HCT116 (cell line): ENCODE measurements at regions of chr7 and their contacts with region 1.

Region 1: DNA sequence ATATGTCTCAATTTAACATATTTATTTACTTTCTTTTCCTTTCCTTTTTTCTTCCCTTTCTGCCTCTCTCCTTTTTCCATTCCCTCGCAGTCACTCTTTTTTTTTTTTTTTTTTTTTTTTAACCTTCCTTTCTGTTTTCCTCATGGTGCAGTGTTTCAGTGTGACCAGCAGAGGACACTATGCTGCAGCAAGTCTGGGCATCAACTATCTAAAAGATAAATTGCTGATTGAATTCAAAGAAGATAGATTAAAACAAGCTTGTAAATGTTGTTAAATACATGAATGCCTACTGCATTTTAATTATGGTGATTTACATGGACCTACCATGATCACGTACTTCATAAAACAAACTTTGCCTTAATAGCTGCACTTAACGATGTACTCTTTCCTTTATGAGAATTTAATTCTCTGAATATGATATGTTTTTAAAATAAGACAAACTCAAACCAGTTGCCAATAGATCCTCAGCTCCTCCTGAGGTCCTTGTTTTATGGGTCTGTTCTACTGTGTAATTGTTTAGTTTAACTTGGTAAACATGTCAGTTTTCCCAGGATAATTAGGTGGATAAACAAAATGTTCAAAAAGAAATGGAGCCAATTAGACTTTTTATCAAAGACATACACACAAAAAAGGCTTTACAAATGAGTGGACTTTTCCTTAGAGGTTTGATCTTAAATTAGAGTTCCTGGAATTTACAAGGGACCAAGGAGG is 101.0 kb upstream of the AGR3 start:
- DNase-seq: peak; percentile 35
- ATAC-seq: no peak; the same call in 1 of the 2 replicates
- H3K4me3 ChIP-seq: no peak overlapping the region
- H3K27ac ChIP-seq: no peak overlapping the region
- H3K4me1 ChIP-seq: peaks cover 3 to 6% of the 10 kb centered on the region in 2 experiments; a peak in 1 of 4 replicates
- H3K27me3 ChIP-seq: no peaks in the 10 kb centered on the region
- CTCF ChIP-seq: peak; percentile 79 to 98 (median 93)
- POLR2A ChIP-seq: no peak
- RAD21 ChIP-seq: peak; percentile 90

Region 2: GRCh38 chr7:16817536-16817935 is 165.3 kb before region 1 on chr7:
- CTCF ChIA-PET with region 1: no interaction called
- POLR2A ChIA-PET with region 1: no interaction called
- RAD21 ChIA-PET with region 1: no interaction called
- intact Hi-C with region 1: no loop called
- DNase-seq: no peak
- ATAC-seq: peak; percentile 30; the same call in 1 of the 2 replicates
- H3K4me3 ChIP-seq: no peak overlapping the region
- H3K27ac ChIP-seq: no peak overlapping the region
- H3K4me1 ChIP-seq: peaks cover 0 to 9% of the 10 kb centered on the region in 2 experiments; a peak in 2 of 4 replicates
- H3K27me3 ChIP-seq: no peaks in the 10 kb centered on the region
- CTCF ChIP-seq: no peak
- POLR2A ChIP-seq: no peak
- RAD21 ChIP-seq: no peak

Region 3: DNA sequence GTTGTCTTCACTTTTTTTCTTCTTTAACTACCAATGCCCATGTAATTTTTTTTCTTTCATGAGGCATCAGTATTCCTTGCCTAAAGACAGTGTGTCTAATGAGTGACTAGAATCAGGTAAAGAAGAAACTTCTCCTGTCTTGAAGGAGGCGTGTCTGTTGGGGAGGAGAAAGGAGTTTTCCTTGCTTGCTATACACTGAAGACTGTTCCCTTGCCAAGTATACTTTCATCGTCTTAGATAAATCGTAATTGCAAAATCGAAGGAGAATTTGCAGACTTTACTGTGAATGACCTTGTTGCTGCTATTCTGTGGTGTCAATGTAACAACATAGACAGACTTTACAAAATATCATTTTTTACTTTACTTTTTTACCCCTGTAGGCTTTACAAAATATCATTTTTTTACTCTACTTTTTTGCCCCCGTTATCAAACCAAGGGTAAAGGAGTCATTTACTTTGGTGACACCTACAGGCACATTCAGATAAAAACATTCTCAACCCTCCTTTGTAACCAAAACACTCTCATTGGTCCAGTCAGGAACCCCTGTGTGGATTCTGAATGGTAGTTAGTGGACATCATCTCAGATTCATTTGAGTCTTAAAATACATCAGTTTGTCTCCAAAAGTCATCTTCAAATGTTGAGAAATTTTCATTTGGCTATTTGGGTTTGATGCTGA is 548.1 kb after region 1 on chr7:
- CTCF ChIA-PET with region 1: interaction called, 3 read pairs
- POLR2A ChIA-PET with region 1: no interaction called
- RAD21 ChIA-PET with region 1: interaction called in 1 of 2 experiments, 4 read pairs
- intact Hi-C with region 1: loop called (anchors 1 kb)
- DNase-seq: peak; percentile 26
- ATAC-seq: peak; percentile 83
- H3K4me3 ChIP-seq: no peak overlapping the region
- H3K27ac ChIP-seq: no peak overlapping the region
- H3K4me1 ChIP-seq: peaks cover 0 to 13% of the 10 kb centered on the region in 2 experiments; a peak in 1 of 4 replicates
- H3K27me3 ChIP-seq: no peaks in the 10 kb centered on the region
- CTCF ChIP-seq: peak; percentile 37 to 56 (median 49); a peak in 5 of 6 replicates
- POLR2A ChIP-seq: no peak
- RAD21 ChIP-seq: peak; percentile 77

Region 4: DNA sequence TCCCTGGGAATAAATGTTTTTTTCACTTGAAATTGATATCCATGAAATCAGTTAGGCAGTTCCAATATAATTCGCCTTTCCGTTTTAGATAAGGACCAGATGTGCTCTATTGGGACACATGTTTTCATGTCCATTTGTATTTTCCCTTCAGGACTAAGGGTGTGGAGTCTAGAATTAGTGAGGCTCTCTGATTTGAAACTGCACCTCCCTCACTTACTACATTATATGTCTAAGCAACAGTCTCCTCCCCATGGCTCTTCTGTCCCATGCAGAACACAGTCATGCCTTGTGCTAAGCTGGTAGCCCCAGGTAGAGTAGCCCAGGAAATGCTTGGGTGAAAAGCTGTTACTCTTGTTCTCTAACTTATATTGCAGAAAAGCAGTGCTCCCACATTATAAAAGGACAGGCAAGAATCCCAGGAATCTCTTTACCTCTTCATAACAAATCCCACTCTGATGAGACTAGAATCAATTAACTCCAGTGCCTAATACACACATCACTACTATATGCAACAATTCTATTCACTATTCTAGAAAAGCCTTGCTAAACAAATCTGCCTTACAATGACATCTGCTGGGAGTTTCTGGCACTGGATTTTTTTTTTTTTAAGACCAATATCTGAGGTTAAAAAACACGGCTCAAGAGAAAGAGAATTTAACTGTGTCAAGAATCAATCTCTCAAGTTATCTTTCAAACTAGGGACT is 663.6 kb after region 1 on chr7:
- CTCF ChIA-PET with region 1: interaction called, 9 read pairs
- POLR2A ChIA-PET with region 1: no interaction called
- RAD21 ChIA-PET with region 1: interaction called, 3 to 6 read pairs
- intact Hi-C with region 1: loop called (anchors 1 kb)
- DNase-seq: no peak
- ATAC-seq: peak; percentile 47; the same call in 1 of the 2 replicates
- H3K4me3 ChIP-seq: no peak overlapping the region
- H3K27ac ChIP-seq: no peak overlapping the region
- H3K4me1 ChIP-seq: no peaks in the 10 kb centered on the region
- H3K27me3 ChIP-seq: no peaks in the 10 kb centered on the region
- CTCF ChIP-seq: peak in 2 of 3 experiments; percentile 33 to 44; a peak in 2 of 6 replicates
- POLR2A ChIP-seq: no peak
- RAD21 ChIP-seq: peak; percentile 67